Mammary epithelial cell (primary cell): ENCODE measurements at regions of chr17 and their contacts with region 1.

Region 1: DNA sequence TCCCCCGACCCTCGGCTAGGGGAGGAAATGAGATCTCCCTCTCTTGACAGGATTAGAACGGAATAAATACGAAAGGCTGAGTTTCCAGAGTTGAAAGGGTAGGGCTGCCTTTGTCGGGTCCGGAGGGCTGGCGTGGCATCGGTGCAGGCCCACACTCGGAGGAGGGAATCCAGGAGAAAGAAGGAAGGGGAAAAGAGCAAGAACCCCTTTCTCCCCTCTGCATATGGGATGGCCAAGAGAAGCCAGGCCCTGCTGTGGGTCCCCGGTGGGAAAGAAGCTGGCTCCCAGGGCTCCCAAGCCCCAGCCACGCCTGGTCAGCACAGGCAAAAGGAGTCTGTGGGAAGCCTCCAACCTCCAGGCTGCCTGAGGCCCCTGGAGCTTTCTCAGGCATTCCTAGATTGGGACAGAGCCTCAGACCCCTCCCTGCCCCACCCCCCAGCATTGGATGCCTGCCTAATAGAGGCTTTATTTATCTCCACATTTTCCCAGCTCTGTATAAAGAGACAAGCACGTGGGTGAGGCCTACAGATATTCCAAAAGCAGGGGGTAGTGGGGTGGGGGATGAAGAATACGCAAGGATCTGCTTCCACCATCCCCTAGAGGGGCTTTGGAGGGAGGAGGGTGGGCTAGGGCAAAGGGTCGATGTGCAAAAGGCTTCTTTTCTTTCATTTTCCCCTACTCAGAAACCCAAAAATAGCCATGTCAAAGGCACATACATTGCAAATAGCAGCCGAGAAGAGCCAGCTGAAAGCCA is 56.3 kb downstream of the MPRIP start:
- DNase-seq: no peak
- H3K4me3 ChIP-seq: no peak overlapping the region
- H3K27ac ChIP-seq: no peak overlapping the region
- H3K4me1 ChIP-seq: peaks cover 31% of the 10 kb centered on the region
- H3K27me3 ChIP-seq: no peaks in the 10 kb centered on the region
- CTCF ChIP-seq: no peak

Region 2: GRCh38 chr17:17063546-17064122 is 35.0 kb before region 1 on chr17:
- CTCF ChIA-PET with region 1: no interaction called
- dilution Hi-C with region 1: loop called (anchors 5 kb)
- in situ Hi-C with region 1: no loop called
- intact Hi-C with region 1: no loop called
- DNase-seq: peak; percentile 36
- H3K4me3 ChIP-seq: no peak overlapping the region
- H3K27ac ChIP-seq: peak overlapping the region; percentile 2
- H3K4me1 ChIP-seq: peaks cover 38% of the 10 kb centered on the region
- H3K27me3 ChIP-seq: no peaks in the 10 kb centered on the region
- CTCF ChIP-seq: no peak

Region 3: GRCh38 chr17:17206124-17206912 is 107.7 kb after region 1 on chr17 and contains the start of gene PLD6:
- CTCF ChIA-PET with region 1: no interaction called
- dilution Hi-C with region 1: no loop called
- in situ Hi-C with region 1: no loop called
- intact Hi-C with region 1: no loop called
- DNase-seq: peak; percentile 59
- H3K4me3 ChIP-seq: peak within 1 kb of the TSS; percentile 14 to 64 (median 53)
- H3K27ac ChIP-seq: no peak within 1 kb of the TSS
- H3K4me1 ChIP-seq: peaks cover 32% of the 10 kb centered on the region
- H3K27me3 ChIP-seq: no peaks in the 10 kb centered on the region
- CTCF ChIP-seq: no peak
- total RNA-seq, gene PLD6: 1.8 to 4.3 TPM